ENCODE measurements at regions of chr17 and their contacts with region 1.

Region 1: GRCh38 chr17:39800540-39800939 is 62.8 kb downstream of the GRB7 start:
- DNase-seq: peak; percentile 85
- H3K4me3 Mint-ChIP-seq: no peak overlapping the region
- H3K27ac Mint-ChIP-seq: no peak overlapping the region
- H3K4me1 Mint-ChIP-seq: peaks cover 17% of the 10 kb centered on the region
- H3K27me3 Mint-ChIP-seq: no peaks in the 10 kb centered on the region
- CTCF ChIP-seq: no peak

Region 2: GRCh38 chr17:39648616-39649366 is 151.7 kb before region 1 on chr17:
- CTCF ChIA-PET with region 1: interaction called, 123 read pairs
- intact Hi-C with region 1: no loop called
- DNase-seq: peak; percentile 76
- H3K4me3 Mint-ChIP-seq: no peak overlapping the region
- H3K27ac Mint-ChIP-seq: no peak overlapping the region
- H3K4me1 Mint-ChIP-seq: peaks cover 33% of the 10 kb centered on the region
- H3K27me3 Mint-ChIP-seq: no peaks in the 10 kb centered on the region
- CTCF ChIP-seq: no peak

Region 3: DNA sequence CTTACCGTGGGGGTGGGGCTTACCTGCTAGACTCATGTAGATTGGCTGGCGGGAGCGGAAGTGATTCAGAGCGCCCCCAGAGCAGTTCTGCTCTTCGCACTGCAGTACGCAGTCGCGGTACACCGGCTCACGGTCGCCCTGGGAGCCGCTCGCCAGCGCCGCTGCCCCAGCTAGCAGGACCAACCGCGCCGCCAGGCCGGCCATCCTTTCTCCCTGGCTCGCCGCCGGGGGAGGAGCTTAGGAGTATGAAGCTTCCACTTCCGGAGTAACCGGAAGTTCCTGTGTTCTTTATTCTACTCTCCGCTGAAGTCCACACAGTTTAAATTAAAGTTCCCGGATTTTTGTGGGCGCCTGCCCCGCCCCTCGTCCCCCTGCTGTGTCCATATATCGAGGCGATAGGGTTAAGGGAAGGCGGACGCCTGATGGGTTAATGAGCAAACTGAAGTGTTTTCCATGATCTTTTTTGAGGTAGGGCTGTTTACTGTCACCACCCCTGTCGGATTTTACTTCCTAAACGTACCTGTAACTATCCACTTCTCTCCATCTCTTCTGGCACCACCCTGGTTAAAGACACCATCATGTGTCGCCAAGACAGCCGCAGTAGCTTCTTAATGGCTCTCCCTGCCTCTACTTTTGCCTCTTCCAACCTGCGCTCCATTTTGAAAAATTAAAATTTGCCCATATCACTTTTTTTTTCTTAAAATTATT is 112.6 kb before region 1 on chr17 and contains the start of gene PGAP3:
- CTCF ChIA-PET with region 1: interaction called, 59 read pairs
- intact Hi-C with region 1: no loop called
- DNase-seq: peak; percentile 100
- H3K4me3 Mint-ChIP-seq: peak within 1 kb of the TSS; percentile 64
- H3K27ac Mint-ChIP-seq: peak within 1 kb of the TSS; percentile 63
- H3K4me1 Mint-ChIP-seq: peaks cover 27% of the 10 kb centered on the region
- H3K27me3 Mint-ChIP-seq: no peaks in the 10 kb centered on the region
- CTCF ChIP-seq: no peak
- total RNA-seq, gene PGAP3: 1,186 and 1,276 TPM in 2 replicates

Region 4: GRCh38 chr17:39744836-39745672 is 55.5 kb before region 1 on chr17:
- CTCF ChIA-PET with region 1: interaction called, 127 read pairs
- intact Hi-C with region 1: no loop called
- DNase-seq: no peak
- H3K4me3 Mint-ChIP-seq: no peak overlapping the region
- H3K27ac Mint-ChIP-seq: no peak overlapping the region
- H3K4me1 Mint-ChIP-seq: peaks cover 32% of the 10 kb centered on the region
- H3K27me3 Mint-ChIP-seq: no peaks in the 10 kb centered on the region
- CTCF ChIP-seq: no peak

Region 5: DNA sequence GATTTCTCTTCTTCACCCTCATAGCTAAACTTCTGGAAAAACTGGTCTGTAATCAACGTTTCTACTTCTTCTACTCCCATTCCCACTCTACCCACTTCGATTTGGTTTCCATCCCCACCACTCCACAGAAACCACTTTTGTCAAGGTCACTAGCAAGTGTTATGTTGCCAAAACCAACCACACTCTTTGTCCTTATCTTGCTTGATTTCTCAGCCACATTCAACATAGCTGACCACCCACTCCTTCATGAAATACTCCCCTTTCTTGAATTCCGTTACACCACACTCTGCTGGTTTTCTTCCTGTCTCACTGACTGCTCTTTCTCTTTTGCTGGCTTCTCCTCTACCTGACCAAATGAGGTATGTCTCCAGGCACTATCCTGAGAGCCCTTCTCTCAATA is 51.7 kb after region 1 on chr17:
- CTCF ChIA-PET with region 1: interaction called, 429 read pairs
- intact Hi-C with region 1: no loop called
- DNase-seq: peak; percentile 59
- H3K4me3 Mint-ChIP-seq: no peak overlapping the region
- H3K27ac Mint-ChIP-seq: no peak overlapping the region
- H3K4me1 Mint-ChIP-seq: peaks cover 10% of the 10 kb centered on the region
- H3K27me3 Mint-ChIP-seq: no peaks in the 10 kb centered on the region
- CTCF ChIP-seq: no peak

Region 6: DNA sequence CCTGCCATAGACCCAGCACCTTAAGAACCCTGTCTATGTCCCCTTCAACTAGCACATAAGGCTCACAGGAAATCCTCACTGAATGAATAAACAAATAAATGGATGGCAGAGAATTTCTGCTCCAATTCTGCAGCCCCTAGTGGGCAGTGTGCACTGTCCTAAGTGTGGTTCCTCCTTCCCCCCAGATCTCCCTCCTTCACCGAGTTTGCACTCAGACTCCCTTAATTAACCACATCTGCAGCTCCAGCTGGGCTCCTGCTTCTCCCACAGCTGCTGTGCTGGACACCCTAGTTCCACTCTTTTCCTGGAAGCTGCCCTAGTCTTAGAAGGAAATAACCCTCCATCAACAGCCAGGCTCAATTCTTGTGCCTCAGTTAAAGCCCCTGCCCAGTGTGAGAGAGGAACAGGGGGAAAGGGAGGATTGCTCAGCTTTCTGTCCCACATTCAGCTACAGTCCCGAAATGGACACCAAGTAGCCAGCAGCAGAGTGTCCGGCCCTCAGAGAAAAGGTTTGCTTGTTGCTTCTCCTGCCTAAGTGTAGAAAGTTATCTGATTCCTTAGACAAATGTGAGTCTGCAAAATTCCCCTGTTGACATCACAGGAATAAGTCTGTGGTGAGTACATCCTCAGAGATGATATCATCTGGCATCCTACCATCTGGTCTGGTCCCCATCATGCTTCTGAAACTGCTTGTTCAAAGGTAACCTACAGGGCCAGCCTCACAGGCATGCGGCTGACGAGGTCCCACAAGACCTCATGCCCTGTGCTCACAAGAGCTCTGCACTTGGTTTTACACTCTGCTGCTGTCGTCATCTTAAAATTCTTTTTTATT is 139.3 kb after region 1 on chr17:
- CTCF ChIA-PET with region 1: interaction called, 501 read pairs
- intact Hi-C with region 1: no loop called
- DNase-seq: peak; percentile 76
- H3K4me3 Mint-ChIP-seq: no peak overlapping the region
- H3K27ac Mint-ChIP-seq: no peak overlapping the region
- H3K4me1 Mint-ChIP-seq: peaks cover 12% of the 10 kb centered on the region
- H3K27me3 Mint-ChIP-seq: peaks cover 63% of the 10 kb centered on the region
- CTCF ChIP-seq: no peak

Region 7: DNA sequence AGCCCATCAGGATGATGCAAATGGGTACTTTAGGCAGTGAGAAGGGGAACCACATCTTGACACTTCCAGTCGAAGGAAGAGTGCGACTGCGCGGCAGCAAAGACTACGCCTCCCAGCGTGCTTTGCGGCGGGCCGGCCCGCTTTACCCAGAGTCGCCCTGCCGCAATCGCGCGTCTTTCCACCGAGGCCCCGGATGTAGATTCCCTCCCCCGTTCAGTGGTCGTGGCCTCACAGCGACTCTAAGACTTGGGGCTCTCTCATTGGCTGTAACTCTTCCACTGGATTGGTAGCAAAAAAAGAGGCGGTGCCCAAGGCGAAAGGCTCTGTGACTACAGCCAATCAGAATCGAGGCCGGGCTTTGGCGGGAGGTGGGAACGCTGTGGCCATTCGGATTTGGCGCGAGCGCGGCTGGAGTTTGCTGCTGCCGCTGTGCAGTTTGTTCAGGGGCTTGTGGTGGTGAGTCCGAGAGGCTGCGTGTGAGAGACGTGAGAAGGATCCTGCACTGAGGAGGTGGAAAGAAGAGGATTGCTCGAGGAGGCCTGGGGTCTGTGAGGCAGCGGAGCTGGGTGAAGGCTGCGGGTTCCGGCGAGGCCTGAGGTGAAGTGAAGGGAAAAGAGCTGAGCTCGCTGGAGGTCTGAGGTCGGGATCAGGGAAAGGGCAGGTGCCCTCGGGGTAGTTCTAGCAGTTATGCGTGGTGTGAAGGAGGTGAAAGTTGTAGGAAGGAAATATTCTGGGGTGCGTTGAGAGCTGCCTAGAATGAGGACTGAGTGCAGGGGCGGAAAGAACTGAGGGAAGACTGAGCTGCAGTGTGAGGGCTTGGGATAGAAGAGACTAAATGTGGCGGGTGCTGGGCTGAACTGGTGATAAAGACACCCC is 487.2 kb after region 1 on chr17 and contains the start of gene CDC6:
- CTCF ChIA-PET with region 1: no interaction called
- intact Hi-C with region 1: no loop called
- DNase-seq: peak; percentile 100
- H3K4me3 Mint-ChIP-seq: peak within 1 kb of the TSS; percentile 83
- H3K27ac Mint-ChIP-seq: peak within 1 kb of the TSS; percentile 90
- H3K4me1 Mint-ChIP-seq: peaks cover 71% of the 10 kb centered on the region
- H3K27me3 Mint-ChIP-seq: no peaks in the 10 kb centered on the region
- CTCF ChIP-seq: no peak
- total RNA-seq, gene CDC6: 567 and 645 TPM in 2 replicates

Region 8: DNA sequence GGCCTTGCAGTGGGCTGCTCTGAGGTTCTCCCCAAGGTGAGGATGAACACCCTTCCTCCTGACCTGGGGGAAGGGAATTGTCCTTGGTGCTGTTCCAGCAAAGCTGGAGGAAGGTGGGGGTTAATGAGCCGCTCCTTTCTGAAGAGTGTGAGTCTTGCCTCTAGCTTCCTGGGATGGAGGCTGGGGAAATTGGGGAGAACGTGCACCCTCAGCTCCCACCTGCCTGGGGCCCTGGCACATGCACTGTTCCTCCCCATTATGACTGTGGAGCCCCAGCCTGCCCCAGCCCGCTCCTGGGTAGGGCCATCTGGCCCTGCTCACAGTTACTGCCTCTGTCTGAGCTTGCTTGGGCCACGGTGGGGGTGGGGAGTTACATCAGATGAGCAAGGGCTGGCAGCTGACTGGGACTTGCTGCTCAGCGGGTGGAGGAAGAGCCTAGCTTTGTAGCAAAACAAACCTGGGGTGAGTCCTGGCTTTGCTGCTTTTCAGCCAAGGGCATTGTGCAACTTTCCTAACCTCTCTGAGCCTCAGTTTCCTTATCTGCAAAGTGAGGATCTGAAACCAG is 689.8 kb after region 1 on chr17:
- CTCF ChIA-PET with region 1: no interaction called
- intact Hi-C with region 1: no loop called
- DNase-seq: no peak
- H3K4me3 Mint-ChIP-seq: no peak overlapping the region
- H3K27ac Mint-ChIP-seq: no peak overlapping the region
- H3K4me1 Mint-ChIP-seq: peaks cover 30% of the 10 kb centered on the region
- H3K27me3 Mint-ChIP-seq: peaks cover 71% of the 10 kb centered on the region
- CTCF ChIP-seq: no peak